ENCODE measurements at regions of chr9 and their contacts with region 1.

Region 1: DNA sequence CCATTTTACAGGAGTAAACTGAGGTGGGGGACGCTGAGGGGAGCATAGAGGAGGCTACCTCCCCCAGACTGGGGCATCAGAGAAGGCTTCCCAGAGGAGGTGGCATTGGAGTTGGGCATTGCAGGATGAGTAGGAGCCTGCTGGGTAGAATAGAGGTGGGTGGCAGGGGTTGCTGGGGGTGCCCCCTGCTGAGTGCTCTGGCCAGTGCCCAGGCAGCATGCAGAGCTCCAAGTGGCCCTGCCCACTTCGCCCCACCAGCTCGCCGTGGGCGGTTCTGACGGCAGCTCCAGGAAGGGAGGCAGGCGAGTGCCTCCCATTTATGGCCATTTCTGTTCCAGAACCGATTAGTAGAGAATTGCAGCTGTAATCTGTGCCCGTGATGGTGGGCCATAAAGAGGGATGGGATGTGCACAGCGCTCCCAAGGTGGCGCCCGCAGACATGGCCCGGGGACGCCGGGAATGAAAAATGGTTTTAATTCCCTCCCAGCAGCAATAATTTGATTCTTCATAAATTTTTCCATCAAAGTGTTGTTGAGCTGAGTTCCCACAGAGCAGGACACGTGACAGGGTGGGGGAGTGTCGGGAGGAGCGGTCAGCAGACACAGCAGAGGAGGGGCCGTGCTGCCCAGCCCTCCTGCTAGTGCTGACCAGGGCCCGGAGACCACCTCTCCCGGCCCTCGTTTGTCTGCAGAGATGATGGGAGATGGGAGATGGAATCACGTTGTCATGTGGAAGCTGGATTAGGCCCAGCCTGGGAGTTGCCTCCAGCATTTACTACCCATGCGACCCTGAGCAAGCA is 75.5 kb downstream of the LMX1B start:
- DNase-seq: no peak
- ATAC-seq: no peak
- H3K4me3 ChIP-seq: no peak overlapping the region
- H3K27ac ChIP-seq: no peak overlapping the region
- H3K4me1 ChIP-seq: no peaks in the 10 kb centered on the region
- H3K27me3 ChIP-seq: no peaks in the 10 kb centered on the region
- CTCF ChIP-seq: no peak

Region 2: GRCh38 chr9:126650404-126651341 is 38.6 kb before region 1 on chr9:
- CTCF ChIA-PET with region 1: interaction called, 14 read pairs
- POLR2A ChIA-PET with region 1: no interaction called
- intact Hi-C with region 1: no loop called
- DNase-seq: no peak
- ATAC-seq: no peak
- H3K4me3 ChIP-seq: no peak overlapping the region
- H3K27ac ChIP-seq: no peak overlapping the region
- H3K4me1 ChIP-seq: no peaks in the 10 kb centered on the region; the same call in 1 of the 2 replicates
- H3K27me3 ChIP-seq: peaks cover 6% of the 10 kb centered on the region
- CTCF ChIP-seq: no peak